OCI-LY7 (cell line): ENCODE measurements at regions of chr4 and their contacts with region 1.

Region 1: GRCh38 chr4:114072781-114073180 is 93.3 kb upstream of the ARSJ start:
- DNase-seq: no peak
- H3K4me3 ChIP-seq: no peak overlapping the region
- H3K27ac ChIP-seq: no peak overlapping the region
- H3K4me1 ChIP-seq: no peaks in the 10 kb centered on the region
- CTCF ChIP-seq: no peak

Region 2: DNA sequence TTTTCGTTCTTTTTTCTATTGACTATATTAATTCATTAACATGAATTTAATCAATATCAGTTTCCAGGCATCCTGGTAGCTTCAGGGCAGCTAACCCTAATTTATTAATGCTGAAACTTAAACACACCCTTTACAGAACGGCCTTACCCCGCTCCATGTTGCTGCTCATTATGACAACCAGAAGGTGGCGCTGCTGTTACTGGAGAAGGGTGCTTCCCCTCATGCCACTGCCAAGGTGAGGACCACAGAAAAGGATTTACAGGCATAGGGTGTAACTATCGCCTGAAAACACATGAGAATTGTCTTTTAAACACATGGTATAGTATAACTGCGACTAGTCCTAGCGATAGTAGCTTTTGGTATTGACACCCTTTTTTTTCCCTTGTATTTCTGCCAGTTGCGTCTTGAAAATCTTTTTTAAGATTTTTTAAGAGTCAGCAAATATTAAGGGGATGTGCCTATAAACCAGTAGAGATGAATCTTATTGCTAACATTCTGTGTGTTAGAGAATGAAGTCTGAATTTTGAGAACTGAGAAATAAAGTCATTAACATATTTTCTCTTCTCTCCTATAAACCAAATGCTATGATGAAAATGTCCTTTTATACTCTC is 794.4 kb before region 1 on chr4:
- CTCF ChIA-PET with region 1: no interaction called
- POLR2A ChIA-PET with region 1: no interaction called
- intact Hi-C with region 1: loop called (anchors 5 kb)
- DNase-seq: peak; percentile 67
- H3K4me3 ChIP-seq: no peak overlapping the region
- H3K27ac ChIP-seq: no peak overlapping the region
- H3K4me1 ChIP-seq: no peaks in the 10 kb centered on the region
- CTCF ChIP-seq: peak; percentile 94

Region 3: GRCh38 chr4:113952452-113953029 is 120.2 kb before region 1 on chr4:
- CTCF ChIA-PET with region 1: no interaction called
- POLR2A ChIA-PET with region 1: interaction called, 4 read pairs
- intact Hi-C with region 1: loop called (anchors 5 kb)
- DNase-seq: peak; percentile 50
- H3K4me3 ChIP-seq: no peak overlapping the region
- H3K27ac ChIP-seq: no peak overlapping the region
- H3K4me1 ChIP-seq: no peaks in the 10 kb centered on the region
- CTCF ChIP-seq: peak; percentile 85

Region 4: GRCh38 chr4:114087596-114088230 is 14.9 kb after region 1 on chr4:
- CTCF ChIA-PET with region 1: no interaction called
- POLR2A ChIA-PET with region 1: no interaction called
- intact Hi-C with region 1: no loop called
- DNase-seq: no peak
- H3K4me3 ChIP-seq: no peak overlapping the region
- H3K27ac ChIP-seq: no peak overlapping the region
- H3K4me1 ChIP-seq: no peaks in the 10 kb centered on the region
- CTCF ChIP-seq: no peak